Transverse colon (tissue), 4 donors: ENCODE measurements at regions of chr12 and their contacts with region 1.

Region 1: DNA sequence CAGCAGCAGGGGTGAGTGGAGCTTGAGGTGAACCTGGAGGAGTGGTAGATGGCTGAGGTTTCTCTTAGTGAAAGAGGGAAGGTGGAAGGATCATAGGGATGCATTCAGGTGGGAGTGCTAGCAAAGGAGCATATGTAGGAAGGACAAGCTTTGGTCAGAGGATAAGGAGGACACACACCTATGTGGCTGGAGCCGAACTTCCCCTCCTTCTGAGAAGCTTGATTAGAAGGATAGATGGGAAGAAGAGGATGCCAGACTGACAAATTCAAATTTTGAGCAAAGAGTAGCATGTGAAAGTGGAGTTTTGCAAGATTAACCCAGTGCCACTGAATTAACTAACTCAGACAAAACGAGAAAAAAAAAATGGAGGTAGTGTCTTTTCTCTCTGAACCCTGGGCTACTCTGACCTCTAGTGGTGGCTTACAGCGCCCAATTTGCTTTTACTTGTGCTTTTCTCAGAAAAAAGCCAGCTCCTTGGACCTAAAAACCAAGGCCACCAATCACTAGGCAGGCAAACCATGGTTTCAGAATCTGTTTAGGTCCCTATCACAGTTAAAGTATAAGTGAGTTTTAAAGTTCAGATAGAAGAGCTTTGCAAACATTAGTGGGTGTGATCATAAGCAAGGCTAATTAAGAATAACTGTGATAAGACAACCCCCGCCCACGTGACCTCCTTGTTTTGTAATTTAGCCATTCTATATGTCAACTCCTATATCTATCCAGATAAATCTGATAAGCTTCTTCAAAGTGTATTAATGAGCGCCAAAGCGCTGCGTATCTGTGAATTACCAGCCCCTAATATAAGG is 15.5 kb downstream of the EMP1 start:
- DNase-seq: peak; percentile 65
- H3K4me3 ChIP-seq: no peak overlapping the region
- H3K27ac ChIP-seq: no peak overlapping the region
- H3K4me1 ChIP-seq: peaks cover 6 to 40% (median 18%) of the 10 kb centered on the region in 4 donors
- H3K27me3 ChIP-seq: no peaks in the 10 kb centered on the region
- CTCF ChIP-seq: peak; percentile 77 to 86 (median 80)
- EP300 ChIP-seq: no peak
- POLR2A ChIP-seq: no peak

Region 2: DNA sequence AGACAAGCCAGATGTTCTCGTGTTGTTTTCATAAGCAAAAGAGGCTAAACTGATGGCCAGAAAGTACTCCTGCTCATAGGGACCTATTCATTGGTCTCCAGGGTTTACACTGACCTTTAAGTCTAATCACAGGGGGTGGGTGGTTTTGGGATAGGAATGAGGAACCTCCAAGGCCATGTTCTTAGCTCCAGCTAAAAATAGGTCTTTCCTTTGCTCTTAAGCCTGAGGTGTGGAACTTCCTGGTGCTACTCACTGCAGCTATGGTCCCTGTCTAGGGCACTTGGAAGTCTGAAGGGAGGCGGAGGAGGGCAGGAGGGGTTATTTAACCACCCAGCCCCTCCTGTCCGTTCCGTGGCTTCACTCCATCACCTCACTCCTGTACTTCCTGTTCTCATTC is 302.1 kb before region 1 on chr12:
- in situ Hi-C with region 1: loop called in 2 of 4 experiments (anchors 5 to 10 kb)
- intact Hi-C with region 1: no loop called
- DNase-seq: no peak
- H3K4me3 ChIP-seq: no peak overlapping the region
- H3K27ac ChIP-seq: peak overlapping the region; percentile 5 to 50 (median 44)
- H3K4me1 ChIP-seq: peaks cover 0 to 27% (median 11%) of the 10 kb centered on the region in 4 donors
- H3K27me3 ChIP-seq: no peaks in the 10 kb centered on the region
- CTCF ChIP-seq: no peak
- EP300 ChIP-seq: no peak
- POLR2A ChIP-seq: no peak

Region 3: GRCh38 chr12:12916135-12916944 is 295.7 kb before region 1 on chr12:
- in situ Hi-C with region 1: loop called in 2 of 4 experiments (anchors 5 to 10 kb)
- intact Hi-C with region 1: loop called (anchors 2 kb)
- DNase-seq: peak; percentile 87
- H3K4me3 ChIP-seq: no peak overlapping the region
- H3K27ac ChIP-seq: peak overlapping the region in 3 of 4 donors; percentile 5 to 15 (median 12)
- H3K4me1 ChIP-seq: peaks cover 0 to 6% (median 3%) of the 10 kb centered on the region in 4 donors
- H3K27me3 ChIP-seq: no peaks in the 10 kb centered on the region
- CTCF ChIP-seq: peak; percentile 95 to 98 (median 97)
- EP300 ChIP-seq: no peak
- POLR2A ChIP-seq: no peak

Region 4: GRCh38 chr12:13023811-13024530 is 188.1 kb before region 1 on chr12:
- in situ Hi-C with region 1: loop called in 2 of 4 experiments (anchors 10 kb)
- intact Hi-C with region 1: no loop called
- DNase-seq: peak; percentile 33
- H3K4me3 ChIP-seq: no peak overlapping the region
- H3K27ac ChIP-seq: no peak overlapping the region
- H3K4me1 ChIP-seq: peaks cover 0 to 3% (median 0%) of the 10 kb centered on the region in 4 donors
- H3K27me3 ChIP-seq: peaks cover 41% of the 10 kb centered on the region
- CTCF ChIP-seq: peak in 3 of 5 experiments; percentile 25 to 40 (median 31)
- EP300 ChIP-seq: no peak
- POLR2A ChIP-seq: no peak

Region 5: GRCh38 chr12:13100882-13101769 is 110.9 kb before region 1 on chr12:
- in situ Hi-C with region 1: loop called (anchors 5 to 10 kb)
- intact Hi-C with region 1: loop called (anchors 5 kb)
- DNase-seq: peak; percentile 92
- H3K4me3 ChIP-seq: peak overlapping the region; percentile 43 to 74 (median 53)
- H3K27ac ChIP-seq: peak overlapping the region; percentile 83 to 94 (median 88)
- H3K4me1 ChIP-seq: peaks cover 10 to 55% (median 41%) of the 10 kb centered on the region in 4 donors
- H3K27me3 ChIP-seq: no peaks in the 10 kb centered on the region
- CTCF ChIP-seq: peak in 1 of 5 experiments; percentile 10
- EP300 ChIP-seq: peak; percentile 80
- POLR2A ChIP-seq: peak; percentile 55

Region 6: DNA sequence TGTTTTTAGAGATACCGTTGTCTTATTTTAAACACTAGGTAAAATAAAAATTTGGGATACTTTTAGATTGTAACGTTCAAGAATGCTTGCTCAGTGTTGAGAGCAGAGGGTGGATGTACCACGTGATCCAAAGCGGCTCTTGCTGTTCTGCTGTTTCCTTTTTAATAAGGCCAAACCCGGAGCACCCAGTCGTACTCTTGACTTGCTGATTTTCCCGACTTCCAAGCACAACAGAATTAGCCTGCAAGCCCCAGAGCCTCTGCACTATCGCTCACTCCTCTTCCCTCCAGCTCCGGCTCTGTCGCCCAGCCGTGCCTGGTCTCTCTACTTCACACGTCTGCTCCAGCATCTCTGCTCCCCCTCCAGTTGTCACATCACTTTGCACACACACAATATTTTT is 61.8 kb after region 1 on chr12:
- in situ Hi-C with region 1: no loop called
- intact Hi-C with region 1: no loop called
- DNase-seq: no peak
- H3K4me3 ChIP-seq: no peak overlapping the region
- H3K27ac ChIP-seq: no peak overlapping the region
- H3K4me1 ChIP-seq: peaks cover 0 to 8% (median 2%) of the 10 kb centered on the region in 4 donors
- H3K27me3 ChIP-seq: peaks cover 15% of the 10 kb centered on the region
- CTCF ChIP-seq: no peak
- EP300 ChIP-seq: no peak
- POLR2A ChIP-seq: no peak

Region 7: GRCh38 chr12:13924286-13924685 is 712.2 kb after region 1 on chr12:
- in situ Hi-C with region 1: no loop called
- intact Hi-C with region 1: no loop called
- DNase-seq: no peak
- H3K4me3 ChIP-seq: no peak overlapping the region
- H3K27ac ChIP-seq: no peak overlapping the region
- H3K4me1 ChIP-seq: no peaks in the 10 kb centered on the region
- H3K27me3 ChIP-seq: no peaks in the 10 kb centered on the region
- CTCF ChIP-seq: no peak
- EP300 ChIP-seq: no peak
- POLR2A ChIP-seq: no peak